ENCODE measurements at regions of chr5 and their contacts with region 1.

Region 1: GRCh38 chr5:43120720-43121564 is at the start of gene ZNF131:
- DNase-seq: peak; percentile 97
- H3K4me3 Mint-ChIP-seq: peak within 1 kb of the TSS; percentile 97
- H3K27ac Mint-ChIP-seq: peak within 1 kb of the TSS; percentile 96
- H3K4me1 Mint-ChIP-seq: peaks cover 33% of the 10 kb centered on the region
- H3K27me3 Mint-ChIP-seq: no peaks in the 10 kb centered on the region
- total RNA-seq, gene ZNF131: 27.3 to 27.8 TPM

Region 2: DNA sequence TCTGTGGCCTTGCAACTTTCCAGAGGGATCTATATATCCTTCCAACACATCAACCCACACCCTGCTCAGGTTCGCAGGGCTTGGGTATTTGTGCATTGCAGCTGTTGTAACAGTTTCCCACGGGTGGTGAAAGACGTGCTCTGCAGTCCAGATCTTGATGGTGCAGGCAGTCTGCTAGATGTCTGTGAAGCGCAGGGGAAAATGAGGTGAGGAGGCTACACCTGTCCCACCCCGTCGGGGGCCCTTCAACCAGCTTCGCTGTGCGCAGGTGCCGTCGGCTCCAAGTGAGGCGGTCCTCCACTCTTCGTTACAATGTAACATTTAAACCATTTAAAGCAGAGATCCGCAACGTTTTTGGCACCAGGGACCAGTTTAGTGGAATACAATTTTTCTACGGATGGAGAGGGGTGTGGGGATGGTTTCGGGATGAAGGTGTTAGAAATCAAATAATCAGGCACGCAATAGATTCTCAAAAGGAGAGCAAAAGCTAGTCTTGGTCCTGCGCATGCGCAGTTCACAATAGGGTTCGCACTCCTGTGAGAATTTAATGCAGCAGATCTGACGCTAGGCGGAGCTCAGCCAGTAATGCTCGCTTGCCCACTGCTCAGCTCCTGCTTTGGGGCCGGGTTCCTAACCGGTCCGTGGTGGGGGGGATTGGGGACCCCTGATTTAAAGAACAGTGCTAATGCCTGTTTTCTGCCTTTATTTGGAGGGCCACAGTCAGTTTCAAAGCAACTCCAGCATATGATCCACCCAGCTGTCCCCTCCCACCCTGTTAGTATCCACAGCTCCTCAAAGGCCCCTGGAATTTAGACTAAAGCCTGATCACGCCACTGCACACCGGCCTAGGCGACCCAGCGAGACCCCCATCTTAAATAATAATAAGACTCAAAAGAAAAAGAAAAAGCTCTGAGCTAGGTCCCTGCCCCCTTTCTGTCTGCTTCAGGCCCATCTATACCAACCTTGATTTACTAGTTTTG is 212.1 kb before region 1 on chr5:
- CTCF ChIA-PET with region 1: interaction called, 4 read pairs
- POLR2A ChIA-PET with region 1: interaction called, 4 read pairs
- intact Hi-C with region 1: loop called (anchors 5 kb)
- DNase-seq: peak; percentile 93
- H3K4me3 Mint-ChIP-seq: peak overlapping the region; percentile 82
- H3K27ac Mint-ChIP-seq: peak overlapping the region; percentile 70
- H3K4me1 Mint-ChIP-seq: peaks cover 10% of the 10 kb centered on the region
- H3K27me3 Mint-ChIP-seq: peaks cover 10% of the 10 kb centered on the region

Region 3: GRCh38 chr5:43040287-43041098 is 80.4 kb before region 1 on chr5 and contains the start of gene ANXA2R:
- CTCF ChIA-PET with region 1: interaction called, 7 read pairs
- POLR2A ChIA-PET with region 1: interaction called, 11 read pairs
- intact Hi-C with region 1: loop called (anchors 1 kb)
- DNase-seq: peak; percentile 97
- H3K4me3 Mint-ChIP-seq: peak within 1 kb of the TSS; percentile 94
- H3K27ac Mint-ChIP-seq: peak within 1 kb of the TSS; percentile 96
- H3K4me1 Mint-ChIP-seq: peaks cover 41% of the 10 kb centered on the region
- H3K27me3 Mint-ChIP-seq: no peaks in the 10 kb centered on the region
- total RNA-seq, gene ANXA2R: 2.8 to 3.8 TPM

Region 4: DNA sequence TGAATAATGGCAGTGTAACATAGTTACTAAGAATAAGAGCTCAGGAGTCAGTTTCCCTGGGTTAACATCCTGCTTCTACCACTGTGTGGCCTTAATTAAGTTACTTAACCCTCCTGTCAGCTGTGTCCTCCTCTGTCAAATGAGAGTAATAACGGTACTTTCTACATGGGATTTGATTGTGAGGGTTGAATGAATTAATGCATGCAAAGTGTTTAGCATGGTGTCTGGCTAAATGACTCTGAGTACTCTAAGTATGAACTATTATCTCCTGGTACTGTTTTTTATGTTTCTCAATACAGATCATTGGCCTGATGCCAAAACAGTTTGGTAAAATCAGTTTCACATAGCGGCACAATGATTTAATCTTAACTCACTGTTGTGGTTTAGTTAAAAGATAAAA is 19.3 kb after region 1 on chr5:
- CTCF ChIA-PET with region 1: interaction called, 6 read pairs
- POLR2A ChIA-PET with region 1: interaction called, 12 read pairs
- intact Hi-C with region 1: no loop called
- DNase-seq: no peak
- H3K4me3 Mint-ChIP-seq: no peak overlapping the region
- H3K27ac Mint-ChIP-seq: peak overlapping the region; percentile 34
- H3K4me1 Mint-ChIP-seq: peaks cover 41% of the 10 kb centered on the region
- H3K27me3 Mint-ChIP-seq: no peaks in the 10 kb centered on the region

Region 5: DNA sequence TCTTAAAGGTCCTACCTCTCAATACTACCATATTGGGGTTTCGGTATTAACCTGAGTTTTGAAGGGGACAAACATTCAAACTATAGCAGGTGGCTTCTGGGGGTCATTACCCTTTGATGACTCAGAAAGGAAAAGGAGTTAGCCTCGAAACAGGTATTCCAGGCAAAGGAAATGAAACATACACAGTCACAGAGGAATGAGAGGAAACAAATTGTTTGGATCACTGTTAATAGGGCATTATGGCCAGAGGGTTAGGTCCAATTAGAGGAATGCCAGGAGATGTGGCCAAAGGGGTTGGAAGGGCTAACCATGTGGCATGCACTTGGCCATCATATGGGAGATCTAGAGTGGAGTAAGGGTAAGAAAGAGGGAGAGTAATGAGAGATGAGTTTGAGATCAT is 47.2 kb after region 1 on chr5:
- CTCF ChIA-PET with region 1: no interaction called
- POLR2A ChIA-PET with region 1: no interaction called
- intact Hi-C with region 1: no loop called
- DNase-seq: no peak
- H3K4me3 Mint-ChIP-seq: no peak overlapping the region
- H3K27ac Mint-ChIP-seq: no peak overlapping the region
- H3K4me1 Mint-ChIP-seq: peaks cover 6% of the 10 kb centered on the region
- H3K27me3 Mint-ChIP-seq: no peaks in the 10 kb centered on the region

Region 6: DNA sequence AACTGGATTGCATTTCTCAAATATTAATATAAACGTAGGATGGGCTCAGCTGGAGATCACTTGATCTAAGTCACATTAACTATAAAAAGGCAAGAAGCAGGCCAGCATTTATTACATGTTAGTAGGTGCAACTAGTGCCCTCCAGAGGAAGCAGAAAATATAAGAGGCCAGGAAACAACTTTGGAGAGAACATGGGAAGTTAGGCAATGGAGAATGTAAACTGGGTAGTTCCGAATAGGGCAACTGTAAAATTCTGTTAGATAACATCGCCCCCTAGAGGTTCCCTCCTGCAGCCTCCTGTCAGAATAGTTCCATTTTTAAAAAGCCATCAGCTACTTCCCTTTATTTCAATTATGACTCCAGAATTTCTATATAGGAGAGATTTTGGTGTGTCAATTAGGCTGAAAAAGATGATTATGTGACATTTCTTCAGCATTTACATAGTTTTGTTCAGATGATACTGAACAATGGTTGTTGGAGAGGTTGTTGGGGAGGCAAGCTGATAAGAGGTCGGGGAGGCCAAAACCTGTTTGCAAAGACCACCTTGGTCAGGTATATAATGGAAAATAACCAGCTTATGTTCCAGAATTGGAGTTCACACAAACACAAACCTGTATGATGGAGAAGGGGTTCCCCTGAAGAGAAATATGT is 268.9 kb after region 1 on chr5:
- CTCF ChIA-PET with region 1: interaction called, 14 read pairs
- POLR2A ChIA-PET with region 1: no interaction called
- intact Hi-C with region 1: no loop called
- DNase-seq: peak; percentile 58
- H3K4me3 Mint-ChIP-seq: no peak overlapping the region
- H3K27ac Mint-ChIP-seq: no peak overlapping the region
- H3K4me1 Mint-ChIP-seq: peaks cover 31% of the 10 kb centered on the region
- H3K27me3 Mint-ChIP-seq: no peaks in the 10 kb centered on the region

Region 7: GRCh38 chr5:44808435-44809214 is 1687.7 kb after region 1 on chr5 and contains the start of gene MRPS30:
- CTCF ChIA-PET with region 1: no interaction called
- POLR2A ChIA-PET with region 1: no interaction called
- intact Hi-C with region 1: loop called (anchors 5 kb)
- DNase-seq: peak; percentile 94
- H3K4me3 Mint-ChIP-seq: peak within 1 kb of the TSS; percentile 99
- H3K27ac Mint-ChIP-seq: peak within 1 kb of the TSS; percentile 98
- H3K4me1 Mint-ChIP-seq: peaks cover 29% of the 10 kb centered on the region
- H3K27me3 Mint-ChIP-seq: peaks cover 1% of the 10 kb centered on the region
- total RNA-seq, gene MRPS30: 47.1 to 49.3 TPM